RWPE1 (cell line): ENCODE measurements at regions of chr6 and their contacts with region 1.

Region 1: DNA sequence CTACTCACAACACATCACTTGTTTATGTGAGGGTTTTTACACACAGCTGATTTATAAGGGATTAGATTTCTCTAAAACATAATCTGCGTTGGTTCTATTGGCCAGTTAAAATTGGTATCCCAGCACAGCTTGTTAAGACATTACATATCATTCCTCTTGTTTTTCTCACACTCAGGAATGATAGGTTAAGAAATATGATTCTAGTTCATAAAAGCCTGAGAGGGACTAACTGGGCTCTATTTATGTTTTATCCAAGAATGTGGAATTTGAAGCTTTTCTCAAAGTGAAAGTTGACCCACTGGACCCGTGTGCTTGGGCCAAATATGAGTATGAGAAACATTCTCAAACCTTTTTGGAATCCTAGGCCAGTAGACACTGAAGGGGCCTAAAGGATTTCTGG is 117.3 kb downstream of the TMEM170B start:
- DNase-seq: no peak
- H3K27ac ChIP-seq: no peak overlapping the region
- CTCF ChIP-seq: no peak

Region 2: GRCh38 chr6:11621119-11621518 is 33.8 kb before region 1 on chr6:
- CTCF ChIA-PET with region 1: no interaction called
- POLR2A ChIA-PET with region 1: no interaction called
- DNase-seq: no peak
- H3K27ac ChIP-seq: no peak overlapping the region
- CTCF ChIP-seq: no peak

Region 3: GRCh38 chr6:12233693-12234571 is 579.1 kb after region 1 on chr6:
- CTCF ChIA-PET with region 1: interaction called, 32 read pairs
- POLR2A ChIA-PET with region 1: no interaction called
- DNase-seq: peak; percentile 72
- H3K27ac ChIP-seq: no peak overlapping the region
- CTCF ChIP-seq: peak; percentile 79